A673 (cell line): ENCODE measurements at regions of chr15 and their contacts with region 1.

Region 1: GRCh38 chr15:35078221-35078915 is 6.7 kb downstream of the NANOGP8 start:
- DNase-seq: peak; percentile 69
- H3K4me3 ChIP-seq: no peak overlapping the region
- H3K27ac ChIP-seq: no peak overlapping the region
- H3K4me1 ChIP-seq: no peaks in the 10 kb centered on the region
- H3K27me3 ChIP-seq: no peaks in the 10 kb centered on the region
- CTCF ChIP-seq: peak; percentile 85

Region 2: DNA sequence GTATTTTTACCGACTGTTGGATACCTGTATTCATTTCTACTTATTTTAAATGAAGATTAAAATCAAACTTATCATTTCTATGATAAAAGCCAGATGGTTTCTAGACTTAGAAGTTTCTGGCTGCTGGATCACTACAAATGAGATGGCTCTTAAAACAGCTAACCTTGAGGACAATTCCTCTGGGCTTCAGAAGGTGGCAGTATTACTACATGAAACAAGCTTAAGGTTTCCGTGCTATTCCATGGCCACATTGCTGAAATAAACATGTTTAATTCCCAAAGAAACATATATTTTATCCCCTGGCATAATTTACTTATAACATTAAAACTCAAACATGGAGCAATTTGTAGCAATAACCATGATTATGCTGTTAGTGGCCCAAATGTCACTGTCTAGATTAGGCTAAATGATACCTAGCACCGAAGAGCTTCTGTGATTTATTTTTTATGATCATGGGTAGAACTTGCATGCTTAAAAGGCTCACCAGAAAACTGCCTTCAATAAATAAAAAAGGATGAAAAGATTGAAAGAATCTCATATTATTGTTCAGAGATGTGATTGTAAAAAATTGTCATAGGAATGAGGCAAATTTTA is 210.8 kb after region 1 on chr15:
- CTCF ChIA-PET with region 1: no interaction called
- POLR2A ChIA-PET with region 1: no interaction called
- intact Hi-C with region 1: loop called (anchors 2 kb)
- DNase-seq: peak; percentile 69
- H3K4me3 ChIP-seq: no peak overlapping the region
- H3K27ac ChIP-seq: no peak overlapping the region
- H3K4me1 ChIP-seq: peaks cover 9% of the 10 kb centered on the region
- H3K27me3 ChIP-seq: no peaks in the 10 kb centered on the region
- CTCF ChIP-seq: peak; percentile 84

Region 3: DNA sequence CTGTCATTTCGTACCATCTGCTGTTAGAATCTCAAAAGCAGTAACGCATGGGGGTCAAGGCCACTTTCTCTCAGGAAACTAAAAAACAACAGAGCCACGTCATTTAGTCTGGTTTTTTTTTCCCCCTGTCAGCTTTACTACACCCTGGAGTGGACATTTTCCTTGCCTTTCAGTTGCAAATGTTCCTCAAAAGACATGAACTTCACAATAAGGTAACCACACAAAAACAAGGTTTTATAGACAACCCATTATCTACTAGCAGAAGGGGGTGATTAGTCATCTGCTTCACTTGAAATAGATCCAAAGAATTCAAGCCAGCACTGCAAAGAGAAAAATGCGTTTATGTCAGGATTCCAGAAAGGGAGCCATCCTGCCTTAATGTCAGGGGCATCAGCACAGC is 1329.3 kb after region 1 on chr15:
- CTCF ChIA-PET with region 1: no interaction called
- POLR2A ChIA-PET with region 1: no interaction called
- intact Hi-C with region 1: loop called (anchors 5 kb)
- DNase-seq: peak; percentile 55
- H3K4me3 ChIP-seq: no peak overlapping the region
- H3K27ac ChIP-seq: no peak overlapping the region
- H3K4me1 ChIP-seq: peaks cover 25% of the 10 kb centered on the region
- H3K27me3 ChIP-seq: no peaks in the 10 kb centered on the region
- CTCF ChIP-seq: no peak